Activated B cell treated with CpG ODN at 0.5 μM for 24 hours (primary cell): ENCODE measurements at regions of chr7 and their contacts with region 1.

Region 1: DNA sequence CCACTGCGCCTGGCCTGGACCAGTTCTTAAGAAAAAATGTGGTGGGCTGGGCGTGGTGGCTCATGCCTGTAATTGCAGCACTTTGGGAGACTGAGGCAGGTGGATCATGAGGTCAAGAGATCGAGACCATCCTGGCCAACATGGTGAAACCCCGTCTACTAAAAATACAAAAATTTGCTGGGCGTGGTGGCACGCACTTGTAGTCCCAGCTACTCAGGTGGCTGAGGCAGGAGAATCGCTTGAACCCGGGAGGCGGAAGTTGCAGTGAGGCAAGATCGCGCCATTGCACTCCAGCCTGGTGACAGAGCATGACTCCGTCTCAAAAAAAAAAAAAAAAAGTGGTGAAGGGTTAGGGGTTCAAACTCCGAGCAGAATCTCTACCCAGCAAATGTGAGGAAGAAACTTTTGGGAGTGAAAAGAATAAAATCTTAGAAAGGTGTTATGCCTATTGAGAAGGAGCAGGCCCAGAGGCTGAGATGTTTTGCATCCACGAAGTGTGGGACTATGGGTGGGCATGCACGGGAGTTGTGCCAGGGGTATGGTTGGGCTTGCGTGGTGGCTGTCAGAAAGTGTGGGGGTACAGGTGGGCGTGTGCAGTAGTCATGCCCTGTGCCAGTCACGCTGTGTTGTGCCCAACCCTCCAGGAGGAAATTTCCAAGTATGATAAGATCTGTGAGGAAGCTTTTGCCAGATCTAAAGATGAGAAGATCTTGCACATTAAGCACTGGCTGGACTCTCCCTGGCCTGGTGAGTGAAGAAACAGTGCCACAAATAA is 53.1 kb upstream of the ZMIZ2 start:
- DNase-seq: no peak
- ATAC-seq: no peak
- H3K4me3 Mint-ChIP-seq: no peak overlapping the region
- H3K27ac Mint-ChIP-seq: no peak overlapping the region
- H3K4me1 Mint-ChIP-seq: no peaks in the 10 kb centered on the region
- H3K27me3 Mint-ChIP-seq: no peaks in the 10 kb centered on the region
- CTCF ChIP-seq: no peak

Region 2: GRCh38 chr7:44720301-44720700 is 24.7 kb after region 1 on chr7:
- CTCF ChIA-PET with region 1: no interaction called
- POLR2A ChIA-PET with region 1: no interaction called
- intact Hi-C with region 1: no loop called
- DNase-seq: no peak
- ATAC-seq: no peak
- H3K4me3 Mint-ChIP-seq: no peak overlapping the region
- H3K27ac Mint-ChIP-seq: no peak overlapping the region
- H3K4me1 Mint-ChIP-seq: no peaks in the 10 kb centered on the region
- H3K27me3 Mint-ChIP-seq: no peaks in the 10 kb centered on the region
- CTCF ChIP-seq: no peak

Region 3: GRCh38 chr7:44761207-44762161 is 65.9 kb after region 1 on chr7:
- CTCF ChIA-PET with region 1: no interaction called
- POLR2A ChIA-PET with region 1: interaction called, 10 read pairs
- intact Hi-C with region 1: no loop called
- DNase-seq: no peak
- ATAC-seq: no peak
- H3K4me3 Mint-ChIP-seq: no peak overlapping the region
- H3K27ac Mint-ChIP-seq: no peak overlapping the region
- H3K4me1 Mint-ChIP-seq: peaks cover under 1% of the 10 kb centered on the region
- H3K27me3 Mint-ChIP-seq: no peaks in the 10 kb centered on the region
- CTCF ChIP-seq: no peak